ENCODE measurements at regions of chr11 and their contacts with region 1.

Region 1: DNA sequence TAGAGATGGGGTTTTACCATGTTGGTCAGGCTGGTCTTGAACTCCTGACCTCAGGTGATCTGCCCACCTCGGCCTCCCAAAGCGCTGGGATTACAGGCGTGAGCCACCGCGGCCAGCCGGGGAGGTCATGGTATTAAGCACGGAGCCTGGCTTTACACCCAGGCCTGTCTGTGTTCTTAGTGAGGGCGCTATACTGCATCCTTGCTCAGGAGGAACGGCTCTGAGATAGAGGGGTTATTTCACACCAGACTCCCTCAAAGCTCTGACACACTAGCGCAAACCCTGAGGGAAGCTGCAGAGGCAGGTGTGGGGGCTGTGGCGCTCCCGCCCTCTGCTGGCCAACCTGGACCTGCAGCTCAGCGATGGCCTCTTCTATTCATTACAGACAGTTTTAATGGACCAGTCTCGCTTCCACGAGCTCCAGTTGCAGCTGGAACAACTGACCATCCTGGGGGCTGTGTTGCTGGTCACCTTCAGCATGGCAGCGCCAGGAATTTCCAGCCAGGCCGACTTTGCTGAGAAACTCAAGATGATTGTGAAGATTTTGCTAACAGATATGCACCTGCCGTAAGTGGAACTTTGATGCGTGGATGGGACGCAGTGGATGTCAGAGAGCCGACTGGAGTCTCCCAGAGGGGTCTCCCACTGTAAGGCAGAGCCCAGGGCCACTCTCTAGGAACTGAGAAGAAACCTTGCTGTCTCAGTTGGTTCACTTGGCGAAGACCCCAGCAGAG is 26.2 kb downstream of the TCP11L1 start:
- DNase-seq: peak; percentile 84
- ATAC-seq: peak; percentile 82
- H3K4me3 Mint-ChIP-seq: no peak overlapping the region
- H3K27ac Mint-ChIP-seq: no peak overlapping the region
- H3K4me1 Mint-ChIP-seq: peaks cover 42% of the 10 kb centered on the region
- H3K27me3 Mint-ChIP-seq: no peaks in the 10 kb centered on the region
- CTCF ChIP-seq: peak; percentile 94

Region 2: DNA sequence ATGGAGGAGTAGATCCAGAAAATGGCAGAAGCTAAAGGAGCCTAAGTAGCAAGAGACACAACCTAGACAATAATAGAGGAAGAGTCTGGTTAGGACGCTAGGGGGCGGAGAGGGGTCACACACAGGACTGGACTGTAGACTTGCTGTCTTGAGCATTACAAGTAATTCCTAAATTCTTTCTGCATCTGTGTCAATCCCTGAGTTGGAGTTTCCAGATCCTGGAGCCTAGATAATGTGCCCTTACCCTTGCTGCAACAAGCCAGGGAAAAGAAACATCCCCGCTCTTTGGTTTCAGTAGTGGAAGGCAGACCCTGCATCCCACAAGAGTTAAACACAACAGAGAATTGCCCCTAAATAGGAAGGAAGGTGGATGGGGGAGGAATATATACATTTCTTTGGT is 256.3 kb before region 1 on chr11:
- CTCF ChIA-PET with region 1: interaction called, 18 read pairs
- POLR2A ChIA-PET with region 1: no interaction called
- intact Hi-C with region 1: no loop called
- DNase-seq: peak; percentile 82
- ATAC-seq: peak; percentile 86
- H3K4me3 Mint-ChIP-seq: no peak overlapping the region
- H3K27ac Mint-ChIP-seq: no peak overlapping the region
- H3K4me1 Mint-ChIP-seq: no peaks in the 10 kb centered on the region
- H3K27me3 Mint-ChIP-seq: no peaks in the 10 kb centered on the region
- CTCF ChIP-seq: peak; percentile 64

Region 3: DNA sequence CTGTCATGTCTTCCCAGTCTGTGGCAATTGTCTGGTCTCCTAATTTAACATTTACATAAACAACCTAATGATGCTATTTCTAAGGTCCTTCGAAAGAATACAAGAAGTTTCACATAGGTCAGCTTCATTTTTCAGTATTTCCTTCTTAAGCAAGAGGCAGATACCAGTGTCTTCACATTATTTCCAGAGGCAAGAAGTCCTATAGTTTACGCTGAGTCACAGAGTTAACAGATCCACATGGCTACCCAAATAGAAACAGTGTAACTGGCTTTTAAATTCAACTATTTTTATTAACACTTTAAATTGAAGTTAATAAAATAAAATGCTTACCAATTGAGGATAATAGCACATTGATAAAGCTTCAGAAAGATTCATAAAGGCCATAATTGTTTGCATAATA is 225.0 kb before region 1 on chr11:
- CTCF ChIA-PET with region 1: interaction called, 11 read pairs
- POLR2A ChIA-PET with region 1: interaction called, 3 read pairs
- intact Hi-C with region 1: loop called (anchors 10 kb)
- DNase-seq: no peak
- ATAC-seq: no peak
- H3K4me3 Mint-ChIP-seq: no peak overlapping the region
- H3K27ac Mint-ChIP-seq: no peak overlapping the region
- H3K4me1 Mint-ChIP-seq: no peaks in the 10 kb centered on the region
- H3K27me3 Mint-ChIP-seq: peaks cover 4% of the 10 kb centered on the region
- CTCF ChIP-seq: no peak

Region 4: DNA sequence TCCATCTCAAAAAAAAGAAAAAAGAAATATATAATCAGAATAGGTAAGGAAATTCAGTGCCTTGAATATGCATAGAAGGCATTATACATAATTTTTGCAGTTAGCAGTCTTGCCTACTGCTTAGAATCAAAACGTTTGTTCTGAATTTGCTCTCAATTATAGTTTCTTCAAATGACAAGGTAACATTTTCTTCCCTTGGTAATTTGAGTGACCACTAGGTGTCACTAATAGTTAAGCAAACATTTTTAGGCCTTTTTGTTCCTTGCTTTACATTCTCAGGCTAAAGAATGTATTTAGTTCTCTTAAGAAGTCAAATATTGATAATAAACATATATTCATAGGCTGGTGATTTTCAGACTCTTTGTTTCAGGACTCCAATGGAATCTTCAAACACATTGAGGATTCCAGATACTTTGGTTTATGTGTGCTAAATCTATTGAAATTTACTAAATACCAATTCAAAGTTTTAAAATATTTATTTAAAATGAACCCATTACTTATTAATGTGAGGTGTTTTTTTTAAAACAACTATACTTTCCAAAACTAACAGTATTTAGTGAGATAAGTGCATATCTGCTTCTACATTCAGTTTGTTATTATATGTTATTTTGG is 105.0 kb before region 1 on chr11:
- CTCF ChIA-PET with region 1: interaction called, 80 read pairs
- POLR2A ChIA-PET with region 1: no interaction called
- intact Hi-C with region 1: loop called (anchors 1 kb)
- DNase-seq: no peak
- ATAC-seq: no peak
- H3K4me3 Mint-ChIP-seq: no peak overlapping the region
- H3K27ac Mint-ChIP-seq: no peak overlapping the region
- H3K4me1 Mint-ChIP-seq: peaks cover 10% of the 10 kb centered on the region
- H3K27me3 Mint-ChIP-seq: no peaks in the 10 kb centered on the region
- CTCF ChIP-seq: peak; percentile 71

Region 5: GRCh38 chr11:33000181-33000580 is 65.4 kb before region 1 on chr11:
- CTCF ChIA-PET with region 1: interaction called, 17 read pairs
- POLR2A ChIA-PET with region 1: no interaction called
- intact Hi-C with region 1: no loop called
- DNase-seq: no peak
- ATAC-seq: no peak
- H3K4me3 Mint-ChIP-seq: no peak overlapping the region
- H3K27ac Mint-ChIP-seq: no peak overlapping the region
- H3K4me1 Mint-ChIP-seq: peaks cover 10% of the 10 kb centered on the region
- H3K27me3 Mint-ChIP-seq: peaks cover 2% of the 10 kb centered on the region
- CTCF ChIP-seq: no peak

Region 6: DNA sequence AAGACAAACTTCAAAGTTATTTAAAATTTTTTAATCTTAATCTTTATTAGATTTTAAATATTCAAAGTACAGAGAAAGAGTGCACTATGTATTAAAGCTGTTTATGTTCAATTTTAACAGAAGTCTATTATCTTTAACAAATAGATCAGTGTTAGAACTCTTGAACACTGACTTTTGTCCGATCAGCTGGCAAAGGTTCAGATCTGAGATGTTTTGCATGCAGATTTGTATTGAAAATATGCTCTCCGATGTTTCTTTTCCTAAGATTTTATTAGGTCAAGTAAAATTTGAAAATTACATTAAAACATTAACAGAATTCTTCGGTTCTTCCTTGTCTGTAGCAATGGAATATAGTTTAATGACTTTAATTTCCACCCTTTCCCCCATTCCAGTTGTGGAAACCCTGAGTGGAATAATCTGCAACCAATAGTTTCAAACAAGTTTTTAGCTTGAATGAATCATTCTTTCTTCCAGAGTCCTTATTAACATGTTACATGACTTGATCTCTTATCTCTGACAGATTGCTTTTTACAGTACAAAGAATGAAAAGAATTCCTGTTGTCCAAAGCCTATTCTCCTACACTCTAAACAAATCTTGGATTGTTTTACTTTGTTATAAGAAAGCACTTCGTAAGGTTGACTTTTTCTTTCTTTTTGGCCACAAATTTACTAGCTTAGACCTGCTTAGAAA is 37.6 kb before region 1 on chr11:
- CTCF ChIA-PET with region 1: interaction called, 13 read pairs
- POLR2A ChIA-PET with region 1: interaction called, 3 read pairs
- intact Hi-C with region 1: no loop called
- DNase-seq: no peak
- ATAC-seq: no peak
- H3K4me3 Mint-ChIP-seq: no peak overlapping the region
- H3K27ac Mint-ChIP-seq: no peak overlapping the region
- H3K4me1 Mint-ChIP-seq: no peaks in the 10 kb centered on the region
- H3K27me3 Mint-ChIP-seq: no peaks in the 10 kb centered on the region
- CTCF ChIP-seq: no peak

Region 7: DNA sequence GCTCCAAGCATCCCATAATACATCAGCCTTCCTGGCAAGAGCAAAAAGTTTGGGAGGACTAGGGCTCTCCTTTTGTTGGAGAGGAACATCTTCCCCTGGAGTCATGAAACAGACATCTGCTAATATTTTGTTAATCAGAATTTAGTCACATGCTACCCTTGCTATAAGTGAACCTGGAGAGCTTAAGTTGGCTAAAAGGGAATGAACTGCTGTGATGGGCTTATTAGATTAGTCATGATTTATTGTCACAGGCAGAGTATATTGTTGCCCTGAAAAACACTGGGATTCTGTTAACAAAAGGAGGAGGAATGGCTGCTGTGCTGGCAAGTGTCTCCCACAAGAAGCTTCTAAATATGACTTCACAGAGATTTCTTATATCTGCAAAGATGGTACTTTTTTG is 10.3 kb before region 1 on chr11:
- CTCF ChIA-PET with region 1: interaction called, 10 read pairs
- POLR2A ChIA-PET with region 1: no interaction called
- intact Hi-C with region 1: no loop called
- DNase-seq: no peak
- ATAC-seq: no peak
- H3K4me3 Mint-ChIP-seq: no peak overlapping the region
- H3K27ac Mint-ChIP-seq: no peak overlapping the region
- H3K4me1 Mint-ChIP-seq: peaks cover 7% of the 10 kb centered on the region
- H3K27me3 Mint-ChIP-seq: no peaks in the 10 kb centered on the region
- CTCF ChIP-seq: no peak

Region 8: GRCh38 chr11:33324302-33324985 is 258.8 kb after region 1 on chr11:
- CTCF ChIA-PET with region 1: no interaction called
- POLR2A ChIA-PET with region 1: no interaction called
- intact Hi-C with region 1: no loop called
- DNase-seq: no peak
- ATAC-seq: no peak
- H3K4me3 Mint-ChIP-seq: no peak overlapping the region
- H3K27ac Mint-ChIP-seq: no peak overlapping the region
- H3K4me1 Mint-ChIP-seq: peaks cover 26% of the 10 kb centered on the region
- H3K27me3 Mint-ChIP-seq: no peaks in the 10 kb centered on the region
- CTCF ChIP-seq: no peak

Measured in activated CD8-positive, alpha-beta T cell treated with anti-CD3 and anti-CD28 coated beads for 36 hours (primary cell).